Aorta (tissue), 5 donors: ENCODE measurements at regions of chr17 and their contacts with region 1.

Region 1: DNA sequence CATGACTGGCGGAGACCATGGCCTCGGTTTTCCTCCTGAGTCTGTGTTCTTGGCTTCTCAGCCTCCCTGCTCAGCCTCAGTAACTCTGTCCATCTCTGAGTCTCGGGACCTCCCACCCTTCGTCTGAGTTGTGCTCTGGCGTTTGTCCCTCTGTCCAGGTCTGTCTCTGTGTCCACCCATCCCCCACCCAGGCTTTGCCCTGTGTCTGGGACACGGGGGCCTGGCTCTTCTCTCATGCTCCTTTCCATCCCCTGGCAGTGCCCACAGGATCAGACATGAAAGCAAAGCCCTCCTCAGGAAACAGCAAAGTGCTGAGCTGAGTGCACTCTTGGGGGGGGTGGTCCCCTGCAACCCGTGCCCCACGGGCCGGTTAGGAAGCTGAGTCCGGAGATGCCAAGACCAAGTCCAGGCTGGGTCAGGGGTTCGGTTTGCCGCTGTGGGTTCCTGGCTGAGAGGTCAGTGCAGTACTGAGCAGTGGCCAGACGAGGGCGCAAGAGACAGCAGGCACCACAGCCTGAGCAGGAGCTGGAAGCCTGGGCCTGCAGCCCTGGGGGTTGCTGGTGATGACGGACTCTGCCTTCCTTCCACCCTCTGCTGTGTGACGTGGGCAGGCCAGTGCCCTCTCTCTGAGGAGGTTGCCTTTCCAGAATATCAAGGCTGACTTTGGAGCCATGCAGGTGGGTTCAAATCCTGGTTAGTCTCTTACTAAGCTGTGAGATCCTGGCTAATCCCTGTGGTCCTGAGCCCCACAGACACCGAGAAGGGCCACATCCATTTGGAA is 2.5 kb downstream of the P2RX1 start:
- DNase-seq: peak; percentile 90 to 95
- ATAC-seq: peak; percentile 88
- H3K4me3 ChIP-seq: no peak overlapping the region
- H3K27ac ChIP-seq: no peak overlapping the region
- H3K4me1 ChIP-seq: no peaks in the 10 kb centered on the region
- H3K27me3 ChIP-seq: no peaks in the 10 kb centered on the region

Region 2: GRCh38 chr17:3777366-3778120 is 136.2 kb before region 1 on chr17:
- intact Hi-C with region 1: no loop called
- DNase-seq: no peak
- ATAC-seq: no peak
- H3K4me3 ChIP-seq: no peak overlapping the region
- H3K27ac ChIP-seq: no peak overlapping the region
- H3K4me1 ChIP-seq: no peaks in the 10 kb centered on the region
- H3K27me3 ChIP-seq: no peaks in the 10 kb centered on the region

Region 3: DNA sequence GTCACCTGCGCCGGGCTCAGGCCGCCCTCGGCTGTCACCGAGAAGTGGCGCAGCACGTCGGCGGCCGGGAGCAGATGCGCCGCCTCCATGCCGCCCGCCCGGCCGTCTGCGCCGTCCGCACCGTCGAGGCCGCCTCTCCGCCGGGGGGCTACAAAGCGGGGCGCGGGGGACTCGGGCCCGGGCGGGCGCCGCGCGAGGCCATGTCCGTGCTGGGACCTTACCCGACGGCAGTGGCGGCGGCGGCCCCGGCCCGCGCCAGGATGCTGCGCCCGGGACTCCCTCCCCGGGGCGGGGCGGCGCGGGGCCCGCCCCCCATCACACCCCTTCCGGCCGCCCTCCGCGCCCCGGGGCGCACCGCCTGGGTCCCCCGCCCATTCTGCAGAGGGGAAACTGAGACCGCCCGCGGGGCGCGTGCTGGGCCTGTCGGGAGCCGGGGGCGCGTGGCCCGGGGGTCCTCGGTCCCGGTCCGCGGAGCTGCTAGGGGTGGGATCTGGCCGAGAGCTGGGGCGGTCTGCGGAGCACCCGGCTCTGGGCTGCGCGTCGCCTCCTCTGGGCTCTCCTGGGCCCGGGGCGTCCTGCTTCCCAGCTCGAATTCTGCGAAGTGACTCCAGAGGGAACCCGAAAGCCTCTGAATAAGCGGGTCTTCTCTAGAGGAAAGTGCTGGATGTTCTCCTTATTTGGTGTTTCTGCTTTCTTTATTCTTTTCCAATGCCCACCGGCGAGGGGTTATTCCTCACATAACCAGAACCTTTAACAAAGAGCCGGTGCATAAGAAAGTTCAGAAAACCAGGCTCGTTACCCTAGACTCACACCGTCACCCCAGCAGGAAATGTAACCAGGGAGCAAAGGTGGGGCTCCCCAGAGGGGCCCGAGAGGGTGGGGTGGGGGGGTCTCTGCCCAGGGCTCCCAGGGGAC is 50.7 kb after region 1 on chr17 and contains the start of gene ATP2A3:
- intact Hi-C with region 1: loop called in 1 of 2 experiments (anchors 5 kb)
- DNase-seq: peak in 1 of 2 donors; percentile 85
- ATAC-seq: peak; percentile 76
- H3K4me3 ChIP-seq: peak within 1 kb of the TSS; percentile 60 to 75
- H3K27ac ChIP-seq: peak within 1 kb of the TSS; percentile 2 to 48
- H3K4me1 ChIP-seq: no peaks in the 10 kb centered on the region
- H3K27me3 ChIP-seq: no peaks in the 10 kb centered on the region
- total RNA-seq, gene ATP2A3: 28.7 to 32.1 TPM